Activated T-helper 2 cell treated with anti-CD3 and anti-CD28 coated beads, Interferon-gamma antibody, Interleukin-2, Interleukin-4, amounts not matched to agents 10 μg/mL and 5 μg/mL and 100 μg/mL, durations not matched to agents 14 hours and 24 hours and 36 hours (primary cell): ENCODE measurements at regions of chr1 and their contacts with region 1.

Region 1: GRCh38 chr1:7667625-7668218 is 103.4 kb upstream of the VAMP3 start:
- DNase-seq: peak; percentile 64
- H3K4me3 Mint-ChIP-seq: no peak overlapping the region
- H3K27ac Mint-ChIP-seq: no peak overlapping the region
- H3K4me1 Mint-ChIP-seq: no peaks in the 10 kb centered on the region
- H3K27me3 Mint-ChIP-seq: no peaks in the 10 kb centered on the region

Region 2: DNA sequence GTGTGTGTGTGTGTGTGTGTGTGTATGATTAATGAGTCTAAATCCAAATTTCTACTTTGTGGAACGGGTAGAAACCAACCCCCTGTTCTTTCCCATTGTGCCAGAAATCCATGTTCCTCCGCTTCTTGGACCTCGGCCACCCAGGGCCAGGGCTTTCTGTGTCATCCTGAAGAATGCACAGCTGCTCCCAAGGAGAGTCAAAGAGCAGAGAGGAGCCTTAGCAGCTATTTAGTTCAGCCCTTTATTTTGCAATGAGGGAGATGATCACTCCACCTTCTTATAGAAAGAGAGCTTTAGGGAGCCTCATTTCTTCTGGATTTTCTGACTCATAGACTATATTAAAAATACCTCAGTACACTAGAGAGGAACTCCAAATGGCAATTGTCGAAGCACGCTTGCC is 385.9 kb before region 1 on chr1:
- intact Hi-C with region 1: no loop called
- DNase-seq: no peak
- H3K4me3 Mint-ChIP-seq: no peak overlapping the region
- H3K27ac Mint-ChIP-seq: no peak overlapping the region
- H3K4me1 Mint-ChIP-seq: no peaks in the 10 kb centered on the region
- H3K27me3 Mint-ChIP-seq: peaks cover 5% of the 10 kb centered on the region

Region 3: DNA sequence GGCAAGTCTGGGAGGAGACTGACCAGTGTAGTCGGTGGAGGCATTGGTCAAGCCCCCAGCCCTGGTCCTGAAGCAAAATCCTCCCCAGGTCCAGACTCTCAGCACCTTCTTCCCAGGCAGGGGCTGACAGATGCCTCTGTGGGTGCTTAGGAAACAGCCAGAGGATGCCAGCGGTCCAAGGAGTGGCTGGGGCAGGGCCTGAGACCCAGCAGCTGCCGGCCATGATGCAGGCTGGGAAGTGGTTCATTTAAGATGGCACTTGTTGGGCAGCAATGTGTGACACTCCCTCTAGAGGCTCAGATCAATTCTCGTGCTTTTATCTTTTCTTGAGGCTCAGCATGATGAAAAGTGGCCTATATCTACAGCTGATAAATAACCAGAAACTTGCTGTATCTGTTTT is 61.6 kb before region 1 on chr1:
- intact Hi-C with region 1: no loop called
- DNase-seq: no peak
- H3K4me3 Mint-ChIP-seq: no peak overlapping the region
- H3K27ac Mint-ChIP-seq: no peak overlapping the region
- H3K4me1 Mint-ChIP-seq: no peaks in the 10 kb centered on the region
- H3K27me3 Mint-ChIP-seq: peaks cover 3% of the 10 kb centered on the region

Region 4: DNA sequence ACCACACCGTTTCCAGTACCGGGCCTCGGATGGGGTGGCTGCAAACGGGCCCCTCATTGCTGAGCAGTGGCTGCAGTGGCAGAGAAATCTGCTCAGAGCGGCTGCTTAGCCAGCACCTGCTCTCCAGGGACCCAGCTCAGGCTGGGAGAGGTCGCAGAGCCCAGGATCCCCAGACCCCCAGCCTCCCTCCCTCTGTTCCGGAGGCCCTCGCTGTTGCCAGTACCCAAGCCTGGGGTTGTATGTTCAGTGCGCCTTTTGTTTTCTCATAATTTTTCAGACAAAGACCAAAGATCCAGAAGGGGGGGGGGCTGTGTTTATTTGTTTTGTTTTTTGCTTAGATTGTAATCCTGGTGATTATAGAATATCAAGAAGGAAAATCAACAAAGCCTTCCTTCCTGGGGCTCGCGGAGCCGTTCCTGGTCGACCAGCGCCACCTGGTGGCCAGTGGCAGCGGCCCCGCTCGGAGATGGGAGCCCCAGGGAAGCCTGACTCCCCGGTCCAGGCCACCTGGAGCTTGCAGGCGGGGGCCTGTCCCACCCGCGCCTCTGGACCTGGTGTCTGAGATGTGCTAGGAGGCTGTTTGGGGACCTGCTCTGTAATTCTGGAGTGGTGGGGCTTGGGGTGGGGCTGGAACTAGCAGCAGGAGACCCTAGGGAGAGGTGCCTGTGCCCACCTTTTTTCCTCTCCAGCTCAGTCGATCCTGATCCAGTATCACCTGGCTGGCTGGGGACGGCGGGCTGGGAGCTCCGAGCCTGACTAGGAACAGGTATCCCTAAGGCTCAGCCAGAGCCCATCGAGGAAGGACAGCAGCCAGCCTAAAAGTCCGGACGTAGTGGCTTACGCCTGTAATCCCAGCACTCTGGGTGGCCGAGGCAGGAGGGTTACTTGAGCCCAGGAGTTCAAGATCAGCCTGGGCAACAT is 20.5 kb before region 1 on chr1:
- intact Hi-C with region 1: no loop called
- DNase-seq: peak; percentile 34
- H3K4me3 Mint-ChIP-seq: no peak overlapping the region
- H3K27ac Mint-ChIP-seq: no peak overlapping the region
- H3K4me1 Mint-ChIP-seq: no peaks in the 10 kb centered on the region
- H3K27me3 Mint-ChIP-seq: no peaks in the 10 kb centered on the region

Region 5: DNA sequence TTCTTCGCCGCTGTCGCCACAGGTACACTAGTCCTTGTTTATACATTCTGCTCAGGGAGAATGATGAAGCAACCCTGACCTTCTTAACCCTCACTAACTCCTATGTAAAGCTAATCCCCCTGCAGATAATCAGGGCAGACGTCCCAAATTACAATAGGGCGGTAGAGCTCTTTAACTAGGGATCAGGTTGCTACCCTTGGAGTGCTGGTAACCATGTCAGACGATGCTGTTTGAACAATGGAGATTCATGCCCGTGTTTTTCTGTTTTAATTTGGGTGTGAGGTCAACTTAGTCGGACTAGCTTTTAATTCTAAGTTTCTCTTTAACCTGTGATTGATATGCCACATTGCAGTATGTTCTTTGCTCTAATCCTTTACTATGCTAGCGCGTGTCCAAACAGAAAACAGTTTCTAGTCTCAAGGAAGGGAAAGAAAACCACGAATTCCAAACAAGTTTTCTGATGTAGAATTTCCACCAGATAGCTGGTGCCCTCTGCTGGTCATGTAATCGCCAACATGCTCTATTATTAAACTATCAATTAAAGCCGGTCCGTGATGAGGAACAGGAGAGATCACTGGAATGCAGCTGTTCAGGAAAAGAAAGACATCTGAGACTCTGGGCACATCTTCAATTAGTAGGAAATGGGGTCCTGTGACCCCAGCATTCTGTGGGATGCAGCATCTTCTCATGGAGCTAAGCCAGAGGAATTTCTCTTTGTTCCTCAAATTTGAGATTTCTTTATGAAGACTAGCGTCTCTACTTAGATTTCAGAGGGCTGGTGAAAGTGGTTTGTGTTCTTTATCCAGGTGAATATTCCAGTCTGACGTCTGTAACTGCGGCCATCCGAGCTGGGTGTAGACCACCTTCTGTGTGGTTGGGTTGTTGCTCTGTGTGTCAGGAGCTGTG is 85.0 kb after region 1 on chr1:
- intact Hi-C with region 1: loop called (anchors 1 kb)
- DNase-seq: no peak
- H3K4me3 Mint-ChIP-seq: no peak overlapping the region
- H3K27ac Mint-ChIP-seq: no peak overlapping the region
- H3K4me1 Mint-ChIP-seq: peaks cover 13% of the 10 kb centered on the region
- H3K27me3 Mint-ChIP-seq: peaks cover 21% of the 10 kb centered on the region

Region 6: DNA sequence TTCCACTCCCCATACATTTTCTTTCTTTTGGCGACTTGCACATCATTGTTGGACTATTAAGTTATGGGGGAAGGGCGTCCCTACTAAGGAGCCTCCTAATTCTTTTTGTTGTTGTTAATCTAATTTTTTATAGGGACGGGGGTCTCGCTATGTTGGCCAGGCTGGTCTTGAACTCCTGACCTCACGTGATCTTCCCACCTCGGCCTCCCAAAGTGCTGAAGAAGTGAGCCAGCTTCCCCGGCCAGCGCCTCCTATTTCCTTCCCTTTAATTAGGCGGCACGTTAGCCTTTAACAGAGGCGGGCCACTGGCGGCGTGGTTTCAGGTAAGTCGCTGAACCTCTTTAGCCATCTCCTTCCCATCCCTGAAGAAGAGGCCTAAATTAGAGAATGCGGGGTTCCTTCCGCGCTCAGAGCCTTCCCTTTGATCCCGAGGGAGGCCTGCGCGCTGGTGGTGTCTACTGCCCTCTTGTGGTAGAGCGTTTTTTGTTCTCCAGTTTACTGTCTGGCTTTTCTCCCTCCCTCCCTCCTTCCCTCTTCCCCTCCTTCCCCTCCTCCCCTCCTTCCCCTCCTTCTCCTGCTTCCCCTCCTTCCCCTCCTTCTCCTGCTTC is 234.9 kb after region 1 on chr1:
- intact Hi-C with region 1: loop called (anchors 5 kb)
- DNase-seq: peak; percentile 32
- H3K4me3 Mint-ChIP-seq: peak overlapping the region; percentile 52
- H3K27ac Mint-ChIP-seq: no peak overlapping the region
- H3K4me1 Mint-ChIP-seq: peaks cover 12% of the 10 kb centered on the region
- H3K27me3 Mint-ChIP-seq: peaks cover 2% of the 10 kb centered on the region

Region 7: GRCh38 chr1:8276173-8276914 is 608.6 kb after region 1 on chr1:
- intact Hi-C with region 1: no loop called
- DNase-seq: no peak
- H3K4me3 Mint-ChIP-seq: no peak overlapping the region
- H3K27ac Mint-ChIP-seq: no peak overlapping the region
- H3K4me1 Mint-ChIP-seq: no peaks in the 10 kb centered on the region
- H3K27me3 Mint-ChIP-seq: peaks cover 6% of the 10 kb centered on the region